Sigmoid colon (tissue), 7 donors: ENCODE measurements at regions of chr4 and their contacts with region 1.

Region 1: DNA sequence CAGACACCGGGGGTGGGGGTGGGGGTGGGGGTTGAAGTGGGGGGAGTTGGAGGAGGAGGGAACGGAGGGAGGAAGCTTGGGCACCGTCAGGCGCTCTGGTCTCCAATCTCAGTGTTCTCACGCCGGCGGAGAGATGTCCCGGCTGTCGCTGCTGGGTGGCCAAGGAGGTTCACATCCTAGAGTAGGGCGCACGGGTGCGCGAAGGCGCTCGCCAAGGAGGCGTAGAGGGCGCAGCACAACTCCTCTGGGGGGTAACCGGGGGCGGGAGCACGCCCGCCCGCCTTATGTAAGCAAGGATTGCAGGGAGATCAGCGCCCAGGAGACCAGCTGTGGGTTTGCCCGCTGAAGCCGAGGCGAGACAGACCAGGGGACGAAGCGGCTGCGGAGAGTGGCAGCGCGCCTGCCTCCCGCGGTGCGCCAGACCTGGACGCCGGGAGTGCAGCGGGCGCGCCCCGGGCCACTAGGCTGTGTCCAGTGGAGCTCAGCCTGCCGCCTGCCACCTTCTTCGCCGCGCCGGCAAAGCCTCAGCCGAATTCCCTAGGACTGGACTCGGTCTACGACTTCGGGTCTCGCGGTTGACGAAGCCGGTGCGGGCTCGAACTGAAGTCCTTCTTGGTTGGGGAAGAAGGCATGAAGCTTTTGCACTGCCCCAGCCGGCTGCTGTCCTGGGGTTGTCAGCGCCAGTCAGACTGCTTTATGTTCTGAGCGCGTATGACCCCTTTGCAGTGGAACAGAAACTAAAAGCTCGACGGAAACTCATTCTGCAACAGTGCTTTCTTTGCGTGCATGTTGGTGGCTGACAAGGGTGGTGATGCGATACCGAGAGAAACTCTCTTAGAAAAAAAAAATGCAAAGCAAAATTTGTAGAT is 707 bp upstream of the UNC5C start:
- DNase-seq: peak; percentile 62
- H3K4me3 ChIP-seq: peak overlapping the region; percentile 40 to 57 (median 50)
- H3K27ac ChIP-seq: peak overlapping the region; percentile 59 to 75 (median 70)
- H3K4me1 ChIP-seq: peaks cover 0 to 27% (median 20%) of the 10 kb centered on the region in 4 donors
- H3K27me3 ChIP-seq: peaks cover 0 to 48% (median 16%) of the 10 kb centered on the region in 3 donors
- CTCF ChIP-seq: no peak
- EP300 ChIP-seq: no peak
- POLR2A ChIP-seq: no peak

Region 2: GRCh38 chr4:95165926-95166524 is 383.5 kb before region 1 on chr4:
- intact Hi-C with region 1: loop called (anchors 5 kb)
- DNase-seq: no peak
- H3K4me3 ChIP-seq: no peak overlapping the region
- H3K27ac ChIP-seq: no peak overlapping the region
- H3K4me1 ChIP-seq: no peaks in the 10 kb centered on the region
- H3K27me3 ChIP-seq: no peaks in the 10 kb centered on the region
- CTCF ChIP-seq: peak in 3 of 4 experiments; percentile 51 to 62 (median 53)
- EP300 ChIP-seq: no peak
- POLR2A ChIP-seq: no peak

Region 3: DNA sequence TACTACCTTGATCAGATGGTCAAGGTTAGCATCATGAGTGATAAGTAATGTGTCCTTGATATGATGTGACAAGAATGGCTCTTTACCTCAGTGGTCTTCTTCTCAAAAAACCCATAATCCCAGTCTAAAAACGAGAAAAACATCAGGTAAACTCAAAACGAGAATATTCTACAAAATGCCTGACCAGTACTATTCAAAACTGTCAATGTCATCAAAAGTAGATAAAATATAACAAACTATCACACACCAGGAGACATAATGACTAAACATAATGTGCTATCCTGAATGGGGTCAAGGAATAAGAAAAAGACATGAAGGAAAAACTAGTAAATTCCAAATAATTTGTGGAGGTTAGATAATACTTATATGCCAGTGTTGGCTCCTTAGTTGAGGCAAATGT is 205.2 kb after region 1 on chr4:
- intact Hi-C with region 1: no loop called
- DNase-seq: no peak
- H3K4me3 ChIP-seq: no peak overlapping the region
- H3K27ac ChIP-seq: no peak overlapping the region
- H3K4me1 ChIP-seq: no peaks in the 10 kb centered on the region
- H3K27me3 ChIP-seq: no peaks in the 10 kb centered on the region
- CTCF ChIP-seq: no peak
- EP300 ChIP-seq: no peak
- POLR2A ChIP-seq: no peak

Region 4: GRCh38 chr4:96145601-96146000 is 596.1 kb after region 1 on chr4:
- intact Hi-C with region 1: no loop called
- DNase-seq: no peak
- H3K4me3 ChIP-seq: no peak overlapping the region
- H3K27ac ChIP-seq: no peak overlapping the region
- H3K4me1 ChIP-seq: no peaks in the 10 kb centered on the region
- H3K27me3 ChIP-seq: no peaks in the 10 kb centered on the region
- CTCF ChIP-seq: no peak
- EP300 ChIP-seq: no peak
- POLR2A ChIP-seq: no peak